Spleen (tissue), 13 donors: ENCODE measurements at regions of chr7 and their contacts with region 1.

Region 1: DNA sequence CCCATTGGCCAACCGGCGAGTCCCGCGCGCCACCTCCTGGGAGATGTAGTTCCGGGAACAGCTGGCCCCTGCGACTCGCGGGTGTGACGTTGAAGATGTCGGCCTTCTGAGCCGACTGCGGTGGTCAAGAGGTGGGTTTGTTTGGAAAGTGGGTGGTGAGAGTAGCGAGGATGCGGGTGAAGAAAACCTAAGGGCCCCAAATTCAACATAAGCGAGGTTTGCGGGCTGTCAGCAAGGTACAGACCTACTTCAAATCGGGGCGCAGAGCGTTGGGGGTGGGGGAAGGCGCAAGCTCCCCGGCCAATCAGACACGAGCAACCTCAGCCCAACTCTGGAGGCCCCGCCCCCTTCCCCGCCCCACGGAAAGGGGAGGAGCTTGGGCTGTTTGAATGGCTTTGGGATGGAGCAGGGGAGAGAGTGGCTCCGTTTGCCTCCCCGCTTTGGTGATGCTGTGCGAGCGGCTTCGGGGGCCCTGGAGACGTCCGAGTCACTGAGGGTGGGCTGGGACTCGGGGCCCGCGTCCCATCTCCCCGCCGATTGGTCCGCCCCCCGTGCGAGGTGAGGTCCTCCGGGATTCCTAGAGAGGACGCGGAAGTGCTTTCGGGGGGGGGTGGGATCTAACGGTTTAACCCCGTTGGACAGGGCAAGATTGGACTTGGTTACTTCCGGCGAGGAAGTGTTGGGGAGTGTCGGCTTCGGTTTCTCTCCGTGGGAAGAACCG is at the start of gene ZKSCAN5:
- DNase-seq: peak; percentile 98
- H3K4me3 ChIP-seq: peak within 1 kb of the TSS; percentile 60 to 98 (median 84)
- H3K27ac ChIP-seq: peak within 1 kb of the TSS; percentile 77 to 97 (median 96)
- H3K4me1 ChIP-seq: peaks cover 27 to 67% (median 48%) of the 10 kb centered on the region in 6 donors
- H3K27me3 ChIP-seq: no peaks in the 10 kb centered on the region
- CTCF ChIP-seq: peak in 3 of 11 experiments; percentile 18 to 35 (median 29)
- POLR2A ChIP-seq: peak in 2 of 3 donors; percentile 10 to 37
- total RNA-seq, gene ZKSCAN5: 7.5 to 12.2 (median 9.2) TPM

Region 2: GRCh38 chr7:99551767-99552463 is 47.2 kb after region 1 on chr7 and contains the start of gene FAM200A:
- intact Hi-C with region 1: loop called (anchors 5 kb)
- DNase-seq: peak; percentile 98
- H3K4me3 ChIP-seq: peak within 1 kb of the TSS; percentile 51 to 85 (median 71)
- H3K27ac ChIP-seq: peak within 1 kb of the TSS; percentile 53 to 93 (median 89)
- H3K4me1 ChIP-seq: peaks cover 14 to 49% (median 34%) of the 10 kb centered on the region in 6 donors
- H3K27me3 ChIP-seq: no peaks in the 10 kb centered on the region
- CTCF ChIP-seq: no peak
- POLR2A ChIP-seq: peak; percentile 23 to 38 (median 28)
- total RNA-seq, gene FAM200A: 5.3 to 9.2 (median 6.1) TPM